Activated naive CD4-positive, alpha-beta T cell treated with anti-CD3 and anti-CD28 coated beads, Interleukin-2, amount 10 ng/mL, durations not matched to agents 7 days and 5 days (primary cell): ENCODE measurements at regions of chr11 and their contacts with region 1.

Region 1: GRCh38 chr11:112795142-112795815 is 165.9 kb upstream of the NCAM1 start:
- DNase-seq: peak; percentile 51
- H3K4me3 Mint-ChIP-seq: no peak overlapping the region
- H3K27ac Mint-ChIP-seq: no peak overlapping the region
- H3K4me1 Mint-ChIP-seq: peaks cover 8% of the 10 kb centered on the region
- H3K27me3 Mint-ChIP-seq: peaks cover 3% of the 10 kb centered on the region

Region 2: GRCh38 chr11:112523477-112523876 is 271.8 kb before region 1 on chr11:
- CTCF ChIA-PET with region 1: no interaction called
- DNase-seq: no peak
- H3K4me3 Mint-ChIP-seq: no peak overlapping the region
- H3K27ac Mint-ChIP-seq: no peak overlapping the region
- H3K4me1 Mint-ChIP-seq: no peaks in the 10 kb centered on the region
- H3K27me3 Mint-ChIP-seq: peaks cover 26% of the 10 kb centered on the region

Region 3: GRCh38 chr11:112588252-112588694 is 207.0 kb before region 1 on chr11:
- CTCF ChIA-PET with region 1: interaction called, 18 read pairs
- DNase-seq: peak; percentile 44
- H3K4me3 Mint-ChIP-seq: no peak overlapping the region
- H3K27ac Mint-ChIP-seq: peak overlapping the region; percentile 17
- H3K4me1 Mint-ChIP-seq: no peaks in the 10 kb centered on the region
- H3K27me3 Mint-ChIP-seq: peaks cover 11% of the 10 kb centered on the region